Activated CD8-positive, alpha-beta memory T cell treated with anti-CD3 and anti-CD28 coated beads, Interleukin-2, amount 10 ng/mL, durations not matched to agents 7 days and 5 days (primary cell): ENCODE measurements at regions of chr1 and their contacts with region 1.

Region 1: DNA sequence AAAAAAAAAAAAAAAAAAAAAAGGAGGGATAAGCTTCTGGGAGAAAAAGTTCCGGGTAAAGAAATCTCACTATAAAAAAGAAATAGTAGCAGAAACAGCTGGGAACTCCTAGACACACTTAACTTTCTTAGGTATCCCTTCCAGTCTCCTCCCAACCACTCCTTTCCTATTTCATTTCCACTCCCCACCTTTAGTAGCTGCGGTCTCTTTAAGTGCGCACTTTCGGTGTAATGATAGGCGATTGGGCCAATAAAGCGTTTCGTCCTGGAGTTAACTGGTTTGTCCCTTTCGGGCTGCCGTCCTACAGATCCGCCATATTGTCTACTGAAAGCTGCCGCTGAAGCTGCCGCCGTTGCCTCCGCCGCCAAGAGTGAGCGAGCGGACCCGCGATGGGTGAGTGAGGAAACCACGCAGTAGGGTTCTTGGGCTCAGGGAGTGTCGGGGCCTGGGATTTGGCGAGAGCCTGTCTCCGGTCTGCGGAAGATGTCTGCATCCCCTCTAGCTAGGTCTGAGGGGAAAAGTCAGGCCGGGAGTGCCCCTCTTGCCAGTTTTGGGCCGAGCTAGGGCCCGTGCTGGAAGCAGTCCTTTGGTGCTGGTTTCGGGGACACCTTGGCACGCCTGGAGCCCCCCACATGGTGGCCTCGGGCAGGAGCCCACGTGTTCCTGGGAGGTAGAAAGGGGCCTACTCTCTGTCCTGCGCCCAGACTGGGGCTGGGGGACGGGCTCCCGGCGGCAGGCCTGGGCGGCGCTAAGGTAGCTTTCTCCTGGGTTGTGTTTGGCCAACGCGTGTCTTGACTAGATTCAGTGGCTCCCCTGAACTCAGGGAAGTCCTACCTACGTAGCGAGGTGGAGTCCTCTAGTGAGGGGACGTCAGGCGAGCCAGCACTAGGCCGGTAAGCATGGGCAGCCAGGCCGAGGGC is at the start of gene KPNA6:
- DNase-seq: peak; percentile 95
- ATAC-seq: peak; percentile 87
- H3K4me3 Mint-ChIP-seq: peak within 1 kb of the TSS; percentile 96
- H3K27ac Mint-ChIP-seq: peak within 1 kb of the TSS; percentile 95
- H3K4me1 Mint-ChIP-seq: peaks cover 39% of the 10 kb centered on the region
- H3K27me3 Mint-ChIP-seq: no peaks in the 10 kb centered on the region
- total RNA-seq, gene KPNA6: 59.6 to 82.8 TPM

Region 2: DNA sequence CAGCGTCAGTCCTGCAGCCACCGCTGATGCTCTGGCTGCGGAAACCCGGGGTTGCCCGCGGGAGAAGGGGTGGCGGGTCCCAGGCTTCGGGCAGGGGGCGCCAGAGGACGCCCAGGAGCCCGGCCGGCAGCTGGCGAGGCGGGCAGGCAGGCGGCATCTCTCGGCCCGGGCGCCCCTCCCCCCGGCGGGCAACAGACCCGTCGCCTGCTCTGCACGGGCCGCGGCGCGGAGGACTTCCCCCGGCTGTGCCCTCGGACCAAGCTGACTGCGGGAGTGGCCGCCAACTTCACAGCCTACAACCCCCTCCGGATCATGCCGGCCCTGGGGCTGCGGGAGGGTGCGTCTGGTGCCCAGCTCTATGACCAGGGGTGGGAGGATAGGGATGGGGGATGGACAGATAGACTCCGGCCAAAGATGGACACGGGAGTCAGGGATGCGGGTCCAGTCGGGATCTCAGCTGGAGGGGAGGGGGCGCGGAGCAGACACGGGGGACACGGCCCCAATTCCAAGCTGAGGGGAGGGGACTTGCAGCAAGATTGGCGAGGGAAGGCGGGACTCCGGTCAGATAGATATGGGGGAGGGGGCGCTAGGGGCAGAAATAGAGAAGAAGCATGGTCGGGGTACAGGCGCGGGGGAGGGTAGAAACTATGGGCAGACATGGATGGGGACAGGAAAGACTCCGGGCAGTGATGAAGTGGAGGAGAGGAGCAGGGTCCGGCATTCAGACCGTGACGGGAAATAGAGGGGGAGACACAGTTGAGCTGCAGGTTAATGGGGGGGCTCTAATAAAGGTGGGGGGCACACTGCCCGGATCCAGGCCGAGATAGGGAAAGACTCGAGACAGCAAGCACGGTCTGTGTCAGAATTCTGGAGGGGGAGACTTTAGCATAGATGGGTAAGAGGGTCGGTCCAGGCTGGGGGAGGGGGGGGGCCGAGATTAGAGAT is 345.0 kb before region 1 on chr1:
- CTCF ChIA-PET with region 1: no interaction called
- DNase-seq: peak; percentile 59
- ATAC-seq: peak; percentile 48
- H3K4me3 Mint-ChIP-seq: peak overlapping the region; percentile 52
- H3K27ac Mint-ChIP-seq: no peak overlapping the region
- H3K4me1 Mint-ChIP-seq: peaks cover 19% of the 10 kb centered on the region
- H3K27me3 Mint-ChIP-seq: peaks cover 53% of the 10 kb centered on the region

Region 3: GRCh38 chr1:32045772-32046171 is 62.2 kb before region 1 on chr1:
- CTCF ChIA-PET with region 1: no interaction called
- DNase-seq: peak; percentile 23
- ATAC-seq: no peak
- H3K4me3 Mint-ChIP-seq: no peak overlapping the region
- H3K27ac Mint-ChIP-seq: no peak overlapping the region
- H3K4me1 Mint-ChIP-seq: no peaks in the 10 kb centered on the region
- H3K27me3 Mint-ChIP-seq: no peaks in the 10 kb centered on the region

Region 4: DNA sequence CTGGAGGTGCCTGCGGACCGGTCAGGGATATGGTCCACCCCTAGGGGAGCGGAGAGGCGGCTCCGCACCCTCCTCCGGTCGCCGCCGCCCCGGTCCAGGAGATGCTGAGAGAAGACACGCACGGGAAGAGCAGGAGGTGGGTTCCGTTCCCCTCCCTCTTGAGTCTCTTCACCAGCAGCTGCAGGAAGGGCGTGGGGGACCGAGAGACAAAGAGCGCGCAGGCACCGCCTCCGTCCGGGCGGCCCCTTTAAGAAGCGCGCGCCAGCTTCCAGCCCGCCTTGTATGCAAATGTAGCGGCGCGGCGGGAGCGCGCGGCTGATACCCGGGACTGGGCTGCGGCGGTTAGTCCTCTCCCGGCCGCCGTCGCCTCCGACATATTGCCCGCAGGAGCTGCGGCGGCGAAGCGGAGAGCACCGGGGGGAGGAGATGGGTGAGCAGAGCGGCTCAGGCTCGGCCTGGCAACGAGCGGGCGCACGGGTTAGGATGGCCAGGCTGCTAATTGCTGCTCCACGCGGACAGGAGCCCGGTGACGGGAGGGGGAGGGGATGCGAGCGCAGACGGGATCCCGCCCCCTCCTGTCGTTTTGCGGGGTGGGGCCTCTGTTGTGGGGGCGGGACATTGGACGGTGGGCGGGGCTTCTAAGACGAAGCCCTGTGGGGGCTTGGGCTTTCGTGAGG is 35.2 kb before region 1 on chr1 and contains the start of gene TMEM39B:
- CTCF ChIA-PET with region 1: interaction called, 32 read pairs
- DNase-seq: peak; percentile 96
- ATAC-seq: peak; percentile 89
- H3K4me3 Mint-ChIP-seq: peak within 1 kb of the TSS; percentile 83
- H3K27ac Mint-ChIP-seq: peak within 1 kb of the TSS; percentile 86
- H3K4me1 Mint-ChIP-seq: peaks cover 32% of the 10 kb centered on the region
- H3K27me3 Mint-ChIP-seq: peaks cover 7% of the 10 kb centered on the region
- total RNA-seq, gene TMEM39B: 27.3 to 30.0 TPM

Region 5: GRCh38 chr1:32122151-32122550 is 14.1 kb after region 1 on chr1:
- CTCF ChIA-PET with region 1: interaction called, 16 read pairs
- DNase-seq: no peak
- ATAC-seq: no peak
- H3K4me3 Mint-ChIP-seq: no peak overlapping the region
- H3K27ac Mint-ChIP-seq: no peak overlapping the region
- H3K4me1 Mint-ChIP-seq: peaks cover 29% of the 10 kb centered on the region
- H3K27me3 Mint-ChIP-seq: no peaks in the 10 kb centered on the region

Region 6: DNA sequence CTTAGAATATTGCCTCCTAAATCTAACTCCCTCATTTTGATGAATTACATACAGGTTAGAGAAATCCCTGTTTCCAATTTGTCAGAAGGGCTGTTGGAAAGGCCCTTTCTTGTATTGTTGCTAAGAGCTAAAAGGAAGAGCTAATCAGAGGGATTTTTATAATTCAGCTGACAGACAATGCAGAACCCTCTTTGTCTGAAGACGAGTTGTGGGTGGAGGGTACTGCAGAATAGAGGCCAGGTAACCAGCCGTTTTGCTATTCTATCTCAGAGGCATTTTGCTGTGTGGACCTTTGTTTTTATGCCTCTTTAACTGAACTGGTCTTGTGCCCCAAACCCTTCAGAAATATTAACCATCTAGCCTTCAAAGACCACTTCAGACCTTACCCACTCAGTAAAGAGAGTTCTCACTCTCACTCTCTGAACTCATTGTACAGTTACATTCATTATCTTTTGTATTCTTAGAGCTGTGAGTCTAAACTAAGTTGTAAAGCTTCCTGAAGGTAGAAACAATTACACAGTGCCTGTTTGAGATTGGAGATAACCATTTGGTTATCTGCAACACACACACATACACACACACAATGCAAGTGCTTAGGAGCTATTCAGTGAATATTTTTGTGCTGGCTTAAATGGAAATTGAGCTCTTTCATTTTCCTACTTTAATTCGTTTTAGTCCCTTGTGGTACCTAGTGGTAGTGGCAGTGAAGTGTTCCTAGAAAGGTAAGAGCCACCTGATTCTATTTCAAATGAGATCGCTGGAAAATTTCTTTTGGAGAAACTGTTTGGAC is 19.6 kb after region 1 on chr1:
- CTCF ChIA-PET with region 1: interaction called, 16 read pairs
- DNase-seq: no peak
- ATAC-seq: no peak
- H3K4me3 Mint-ChIP-seq: no peak overlapping the region
- H3K27ac Mint-ChIP-seq: no peak overlapping the region
- H3K4me1 Mint-ChIP-seq: peaks cover 23% of the 10 kb centered on the region
- H3K27me3 Mint-ChIP-seq: no peaks in the 10 kb centered on the region

Region 7: GRCh38 chr1:32179443-32180185 is 71.6 kb after region 1 on chr1 and contains the start of gene TXLNA:
- CTCF ChIA-PET with region 1: interaction called, 14 read pairs
- DNase-seq: peak; percentile 95
- ATAC-seq: peak; percentile 91
- H3K4me3 Mint-ChIP-seq: peak within 1 kb of the TSS; percentile 81
- H3K27ac Mint-ChIP-seq: peak within 1 kb of the TSS; percentile 98
- H3K4me1 Mint-ChIP-seq: peaks cover 41% of the 10 kb centered on the region
- H3K27me3 Mint-ChIP-seq: no peaks in the 10 kb centered on the region
- total RNA-seq, gene TXLNA: 85.8 to 104 TPM

Region 8: DNA sequence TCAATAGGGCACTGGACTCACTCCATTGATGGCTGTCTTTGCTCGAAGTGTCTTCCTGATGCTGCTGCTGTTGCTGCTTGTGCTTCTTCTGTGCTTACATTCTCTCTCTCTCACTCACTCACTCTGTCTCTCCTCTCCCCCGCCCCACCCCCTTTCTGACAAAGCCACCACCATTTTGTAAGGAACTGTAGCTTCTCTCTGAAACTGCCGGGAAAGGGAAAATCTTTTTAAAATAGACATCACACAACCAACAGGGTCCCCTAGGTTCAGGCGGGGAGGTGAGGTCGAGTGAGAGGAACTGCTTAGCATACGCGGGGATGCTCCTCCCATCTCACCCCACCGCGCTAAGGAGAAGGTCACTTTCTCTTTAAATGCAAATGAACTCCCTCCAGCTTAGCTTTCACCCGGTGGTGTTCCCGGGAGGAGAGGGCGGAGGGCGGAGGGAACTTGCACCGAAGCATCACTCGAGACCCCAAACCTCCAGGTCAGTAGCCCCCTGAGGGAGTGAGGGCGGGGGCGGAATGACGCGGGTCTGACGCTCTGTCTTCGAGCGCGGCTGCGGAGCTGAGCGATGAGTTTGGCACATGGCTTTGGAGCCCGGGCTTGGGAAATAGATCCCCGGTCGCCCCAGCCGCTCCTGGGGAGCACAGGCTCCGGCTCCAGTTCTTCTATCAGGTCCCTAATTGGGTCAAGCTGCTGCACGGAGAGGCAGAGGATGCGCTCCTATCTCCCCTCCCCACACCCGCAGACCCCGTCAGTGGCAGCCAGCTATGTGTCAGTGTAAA is 92.4 kb after region 1 on chr1 and contains the start of gene CCDC28B:
- CTCF ChIA-PET with region 1: interaction called, 14 read pairs
- DNase-seq: peak; percentile 71
- ATAC-seq: peak; percentile 62
- H3K4me3 Mint-ChIP-seq: peak within 1 kb of the TSS; percentile 87
- H3K27ac Mint-ChIP-seq: peak within 1 kb of the TSS; percentile 94
- H3K4me1 Mint-ChIP-seq: peaks cover 68% of the 10 kb centered on the region
- H3K27me3 Mint-ChIP-seq: no peaks in the 10 kb centered on the region
- total RNA-seq, gene CCDC28B: 33.0 to 43.3 TPM